Endothelial cell of umbilical vein (primary cell): ENCODE measurements at regions of chr5 and their contacts with region 1.

Region 1: DNA sequence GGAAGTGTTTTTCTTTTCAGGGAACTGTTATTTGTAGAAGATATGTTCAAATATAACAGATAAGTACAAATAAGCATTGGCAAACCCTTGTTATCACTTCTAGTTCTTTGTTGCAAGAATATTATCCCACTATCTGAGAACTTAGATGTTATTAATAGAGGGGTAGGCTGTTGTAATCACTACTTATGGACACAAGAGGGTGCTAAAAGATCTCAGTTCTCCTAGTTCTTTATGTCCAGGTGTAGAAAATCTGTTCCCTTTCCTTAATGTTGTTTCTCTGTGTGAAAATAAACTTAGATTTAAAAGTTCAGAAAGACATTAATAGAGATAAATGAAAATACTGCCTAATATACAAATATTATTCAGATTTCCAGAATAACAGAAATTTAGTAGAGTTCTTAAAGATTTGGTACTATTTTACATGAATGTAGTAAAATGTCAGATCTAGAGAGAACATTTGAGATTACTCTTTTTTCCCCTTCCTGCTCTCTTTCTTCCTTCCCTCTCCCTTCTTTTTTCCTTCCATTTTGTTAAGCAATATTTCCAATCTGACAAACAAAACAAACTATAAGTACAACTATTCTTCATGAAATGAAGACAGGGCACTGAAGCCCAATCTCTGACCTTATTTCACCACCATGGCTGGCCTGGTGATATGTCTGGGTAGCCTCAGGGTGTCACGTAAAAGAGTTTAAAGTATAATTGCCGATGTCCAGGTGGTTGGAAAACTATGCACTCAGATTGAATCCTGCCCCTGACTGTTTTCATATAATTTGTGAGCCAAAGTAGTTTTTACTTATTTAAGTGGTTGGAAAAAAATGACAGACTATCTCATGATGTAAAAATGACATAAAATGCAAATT is 43.6 kb upstream of the C5orf46 start:
- DNase-seq: peak; percentile 63
- H3K4me3 ChIP-seq: no peak overlapping the region
- H3K27ac ChIP-seq: no peak overlapping the region
- H3K4me1 ChIP-seq: no peaks in the 10 kb centered on the region
- H3K27me3 ChIP-seq: no peaks in the 10 kb centered on the region
- CTCF ChIP-seq: peak; percentile 40
- POLR2A ChIP-seq: no peak

Region 2: GRCh38 chr5:147887024-147887627 is 62.8 kb before region 1 on chr5:
- CTCF ChIA-PET with region 1: interaction called, 10 read pairs
- POLR2A ChIA-PET with region 1: no interaction called
- dilution Hi-C with region 1: no loop called
- intact Hi-C with region 1: no loop called
- DNase-seq: peak; percentile 67
- H3K4me3 ChIP-seq: no peak overlapping the region
- H3K27ac ChIP-seq: no peak overlapping the region
- H3K4me1 ChIP-seq: peaks cover 2% of the 10 kb centered on the region
- H3K27me3 ChIP-seq: no peaks in the 10 kb centered on the region
- CTCF ChIP-seq: peak; percentile 37 to 39
- POLR2A ChIP-seq: no peak

Region 3: GRCh38 chr5:147906332-147907095 is 43.4 kb before region 1 on chr5 and contains the start of gene C5orf46:
- CTCF ChIA-PET with region 1: no interaction called
- POLR2A ChIA-PET with region 1: no interaction called
- dilution Hi-C with region 1: no loop called
- intact Hi-C with region 1: no loop called
- DNase-seq: no peak
- H3K4me3 ChIP-seq: no peak within 1 kb of the TSS
- H3K27ac ChIP-seq: no peak within 1 kb of the TSS
- H3K4me1 ChIP-seq: no peaks in the 10 kb centered on the region
- H3K27me3 ChIP-seq: no peaks in the 10 kb centered on the region
- CTCF ChIP-seq: no peak
- POLR2A ChIP-seq: no peak
- total RNA-seq, gene C5orf46: not detected in 2 replicates

Region 4: DNA sequence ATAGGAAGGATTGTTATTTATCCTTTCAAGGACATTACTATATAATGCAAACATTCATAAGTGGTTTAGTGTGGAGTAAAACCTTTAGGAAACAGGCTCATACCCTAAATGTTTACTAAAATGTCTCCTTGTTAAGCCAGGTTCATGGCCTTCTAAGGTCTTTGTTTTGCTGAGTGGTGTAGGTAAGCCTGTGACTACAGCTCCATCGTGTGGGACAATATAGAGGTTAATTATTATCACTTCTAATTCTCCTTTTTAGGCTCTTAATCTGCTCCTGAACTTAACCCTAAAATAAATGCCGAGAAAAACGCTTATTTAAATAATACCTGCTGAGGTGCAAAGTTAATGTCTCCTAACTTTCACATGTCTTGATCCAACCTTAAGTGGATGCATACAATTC is 157.7 kb after region 1 on chr5:
- CTCF ChIA-PET with region 1: interaction called, 18 read pairs
- POLR2A ChIA-PET with region 1: no interaction called
- dilution Hi-C with region 1: no loop called
- intact Hi-C with region 1: loop called (anchors 1 kb)
- DNase-seq: peak; percentile 35
- H3K4me3 ChIP-seq: no peak overlapping the region
- H3K27ac ChIP-seq: no peak overlapping the region
- H3K4me1 ChIP-seq: no peaks in the 10 kb centered on the region
- H3K27me3 ChIP-seq: no peaks in the 10 kb centered on the region
- CTCF ChIP-seq: no peak
- POLR2A ChIP-seq: no peak

Region 5: DNA sequence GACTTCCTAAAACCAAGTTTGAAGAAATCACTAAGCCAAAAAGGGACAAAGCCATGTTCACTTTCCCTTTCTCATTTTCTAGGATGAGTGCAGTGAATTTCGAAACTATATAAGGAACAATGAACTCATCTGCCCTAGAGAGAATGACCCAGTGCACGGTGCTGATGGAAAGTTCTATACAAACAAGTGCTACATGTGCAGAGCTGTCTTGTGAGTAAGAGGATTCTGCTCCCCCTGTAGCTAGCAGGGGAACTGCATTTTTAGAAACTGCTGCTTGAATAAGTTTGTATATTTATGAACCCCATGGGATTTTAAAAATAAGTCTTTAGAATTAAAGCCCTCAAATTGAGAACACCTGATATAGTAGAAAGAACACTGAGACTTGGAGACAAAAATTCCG is 175.7 kb after region 1 on chr5:
- CTCF ChIA-PET with region 1: interaction called, 18 read pairs
- POLR2A ChIA-PET with region 1: no interaction called
- dilution Hi-C with region 1: no loop called
- intact Hi-C with region 1: loop called (anchors 1 kb)
- DNase-seq: peak; percentile 5
- H3K4me3 ChIP-seq: no peak overlapping the region
- H3K27ac ChIP-seq: no peak overlapping the region
- H3K4me1 ChIP-seq: no peaks in the 10 kb centered on the region
- H3K27me3 ChIP-seq: no peaks in the 10 kb centered on the region
- CTCF ChIP-seq: peak in 1 of 2 donors; percentile 9
- POLR2A ChIP-seq: no peak

Region 6: GRCh38 chr5:148374692-148375360 is 424.9 kb after region 1 on chr5:
- CTCF ChIA-PET with region 1: interaction called, 6 read pairs
- POLR2A ChIA-PET with region 1: no interaction called
- dilution Hi-C with region 1: no loop called
- intact Hi-C with region 1: loop called (anchors 1 kb)
- DNase-seq: peak; percentile 66
- H3K4me3 ChIP-seq: no peak overlapping the region
- H3K27ac ChIP-seq: no peak overlapping the region
- H3K4me1 ChIP-seq: peaks cover 16% of the 10 kb centered on the region
- H3K27me3 ChIP-seq: no peaks in the 10 kb centered on the region
- CTCF ChIP-seq: peak; percentile 77 to 78
- POLR2A ChIP-seq: no peak